Spleen (tissue), 13 donors: ENCODE measurements at regions of chr12 and their contacts with region 1.

Region 1: GRCh38 chr12:121697098-121697698 is 15.4 kb upstream of the TMEM120B start:
- DNase-seq: no peak
- H3K4me3 ChIP-seq: no peak overlapping the region
- H3K27ac ChIP-seq: no peak overlapping the region
- H3K4me1 ChIP-seq: peaks cover 0 to 8% (median 4%) of the 10 kb centered on the region in 6 donors
- H3K27me3 ChIP-seq: no peaks in the 10 kb centered on the region
- CTCF ChIP-seq: peak; percentile 32 to 79 (median 67)
- POLR2A ChIP-seq: no peak

Region 2: GRCh38 chr12:121773011-121773777 is 76.0 kb after region 1 on chr12:
- intact Hi-C with region 1: loop called (anchors 2 kb)
- DNase-seq: peak; percentile 94
- H3K4me3 ChIP-seq: no peak overlapping the region
- H3K27ac ChIP-seq: peak overlapping the region in 2 of 8 donors; percentile 5 to 39
- H3K4me1 ChIP-seq: peaks cover 5 to 34% (median 24%) of the 10 kb centered on the region in 6 donors
- H3K27me3 ChIP-seq: no peaks in the 10 kb centered on the region
- CTCF ChIP-seq: peak; percentile 61 to 84 (median 80)
- POLR2A ChIP-seq: no peak

Region 3: GRCh38 chr12:121793838-121794533 is 96.8 kb after region 1 on chr12:
- intact Hi-C with region 1: loop called (anchors 5 kb)
- DNase-seq: peak; percentile 100
- H3K4me3 ChIP-seq: peak overlapping the region; percentile 51 to 80 (median 67)
- H3K27ac ChIP-seq: peak overlapping the region; percentile 93 to 100 (median 100)
- H3K4me1 ChIP-seq: peaks cover 74 to 100% (median 99%) of the 10 kb centered on the region in 6 donors
- H3K27me3 ChIP-seq: no peaks in the 10 kb centered on the region
- CTCF ChIP-seq: peak; percentile 96 to 100 (median 100)
- POLR2A ChIP-seq: no peak